ENCODE measurements at regions of chr6 and their contacts with region 1.

Region 1: GRCh38 chr6:113662688-113663333 is 194.3 kb upstream of the MARCKS start:
- DNase-seq: no peak
- ATAC-seq: no peak
- H3K4me3 ChIP-seq: no peak overlapping the region
- H3K27ac ChIP-seq: no peak overlapping the region
- H3K4me1 ChIP-seq: no peaks in the 10 kb centered on the region
- H3K27me3 ChIP-seq: no peaks in the 10 kb centered on the region

Region 2: DNA sequence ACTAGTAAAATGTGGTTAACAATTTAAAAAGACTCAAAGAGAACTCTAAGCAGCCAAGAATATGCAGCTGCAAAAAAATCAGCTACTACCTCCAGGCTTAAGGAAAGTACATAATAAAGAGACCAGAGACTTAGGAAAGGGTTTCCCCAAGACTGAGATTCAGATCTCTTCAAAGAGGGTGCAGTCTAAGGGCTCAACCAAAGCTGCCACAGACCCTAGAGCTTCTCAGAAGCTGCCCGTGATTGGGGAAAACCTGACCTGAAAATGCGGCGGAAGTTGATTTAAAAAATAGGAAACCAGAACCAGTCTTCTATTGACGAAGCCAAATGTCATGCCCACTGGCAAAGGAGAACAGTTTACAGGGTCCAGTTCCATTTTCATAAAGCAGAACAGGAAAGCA is 322.4 kb before region 1 on chr6:
- intact Hi-C with region 1: no loop called
- DNase-seq: no peak
- ATAC-seq: no peak
- H3K4me3 ChIP-seq: no peak overlapping the region
- H3K27ac ChIP-seq: no peak overlapping the region
- H3K4me1 ChIP-seq: no peaks in the 10 kb centered on the region
- H3K27me3 ChIP-seq: no peaks in the 10 kb centered on the region

Region 3: DNA sequence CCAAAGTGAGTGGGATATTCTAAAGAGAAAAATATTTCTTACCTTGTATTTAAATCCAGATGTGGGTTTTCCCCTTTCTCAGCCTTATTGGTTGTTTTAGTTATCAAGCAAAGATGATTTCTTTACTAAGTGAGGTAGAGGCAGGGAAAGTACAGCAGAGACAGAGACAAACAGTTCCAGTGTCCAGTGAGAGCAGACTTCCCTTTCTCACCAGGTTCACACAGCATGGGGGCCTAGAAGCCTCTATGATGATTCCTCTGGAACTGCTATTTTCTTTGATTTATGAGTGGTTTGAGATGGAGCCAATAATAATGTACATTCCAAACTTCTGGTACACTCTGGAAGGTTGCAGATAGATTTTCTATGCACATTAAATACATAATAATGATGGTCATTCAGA is 39.7 kb before region 1 on chr6:
- intact Hi-C with region 1: loop called in 1 of 2 experiments (anchors 5 kb)
- DNase-seq: no peak
- ATAC-seq: no peak
- H3K4me3 ChIP-seq: no peak overlapping the region
- H3K27ac ChIP-seq: no peak overlapping the region
- H3K4me1 ChIP-seq: no peaks in the 10 kb centered on the region
- H3K27me3 ChIP-seq: no peaks in the 10 kb centered on the region

Measured in aorta (tissue), 5 donors.